Thyroid gland (tissue), 4 donors: ENCODE measurements at regions of chr13 and their contacts with region 1.

Region 1: GRCh38 chr13:36981156-36981743 is 17.9 kb downstream of the ALG5 start:
- DNase-seq: no peak
- H3K4me3 ChIP-seq: no peak overlapping the region
- H3K27ac ChIP-seq: no peak overlapping the region
- H3K4me1 ChIP-seq: peaks cover 0 to under 1% of the 10 kb centered on the region in 2 donors
- H3K27me3 ChIP-seq: no peaks in the 10 kb centered on the region
- CTCF ChIP-seq: peak in 5 of 6 experiments; percentile 27 to 84 (median 54)
- POLR2A ChIP-seq: no peak

Region 2: DNA sequence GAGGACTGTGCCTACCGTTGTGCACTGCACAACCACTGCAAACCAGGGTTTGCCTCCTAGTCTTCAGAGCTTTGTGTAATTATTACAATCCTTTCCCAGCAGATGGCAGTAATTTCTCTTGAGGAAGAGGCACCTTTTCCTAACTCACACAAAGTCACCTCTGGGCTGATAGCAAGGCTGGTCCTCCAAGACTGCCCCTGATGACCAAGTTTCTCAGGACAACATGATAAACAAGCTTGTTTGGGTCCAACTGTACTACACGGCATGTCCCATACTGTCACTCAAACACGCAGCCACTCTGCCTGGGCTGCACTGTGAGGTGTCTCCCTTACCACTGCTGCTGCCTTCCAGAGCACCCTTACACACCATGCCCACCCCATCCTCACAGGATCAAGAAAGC is 123.0 kb before region 1 on chr13:
- intact Hi-C with region 1: loop called (anchors 5 kb)
- DNase-seq: peak in 1 of 2 donors; percentile 12
- H3K4me3 ChIP-seq: no peak overlapping the region
- H3K27ac ChIP-seq: no peak overlapping the region
- H3K4me1 ChIP-seq: no peaks in the 10 kb centered on the region
- H3K27me3 ChIP-seq: no peaks in the 10 kb centered on the region
- CTCF ChIP-seq: peak in 5 of 6 experiments; percentile 19 to 56 (median 55)
- POLR2A ChIP-seq: no peak